Activated T-helper 1 cell treated with anti-CD3 and anti-CD28 coated beads, Interleukin-12 subunit alpha, Interleukin-12 subunit beta, Interleukin-2, Interleukin-4 antibody, amounts not matched to agents 30 ng/mL and 10 ng/mL and 1 ng/mL, durations not matched to agents 14 hours and 24 hours and 36 hours (primary cell): ENCODE measurements at regions of chr3 and their contacts with region 1.

Region 1: GRCh38 chr3:171876680-171877221 is 33.6 kb downstream of the TMEM212 start:
- DNase-seq: no peak
- H3K4me3 Mint-ChIP-seq: no peak overlapping the region
- H3K27ac Mint-ChIP-seq: peak overlapping the region; percentile 18
- H3K4me1 Mint-ChIP-seq: peaks cover 11% of the 10 kb centered on the region
- H3K27me3 Mint-ChIP-seq: peaks cover 16% of the 10 kb centered on the region

Region 2: GRCh38 chr3:171846597-171846996 is 30.2 kb before region 1 on chr3:
- intact Hi-C with region 1: loop called (anchors 1 kb)
- DNase-seq: peak; percentile 7
- H3K4me3 Mint-ChIP-seq: no peak overlapping the region
- H3K27ac Mint-ChIP-seq: no peak overlapping the region
- H3K4me1 Mint-ChIP-seq: peaks cover 20% of the 10 kb centered on the region
- H3K27me3 Mint-ChIP-seq: peaks cover 11% of the 10 kb centered on the region